ENCODE measurements at regions of chr15 and their contacts with region 1.

Region 1: DNA sequence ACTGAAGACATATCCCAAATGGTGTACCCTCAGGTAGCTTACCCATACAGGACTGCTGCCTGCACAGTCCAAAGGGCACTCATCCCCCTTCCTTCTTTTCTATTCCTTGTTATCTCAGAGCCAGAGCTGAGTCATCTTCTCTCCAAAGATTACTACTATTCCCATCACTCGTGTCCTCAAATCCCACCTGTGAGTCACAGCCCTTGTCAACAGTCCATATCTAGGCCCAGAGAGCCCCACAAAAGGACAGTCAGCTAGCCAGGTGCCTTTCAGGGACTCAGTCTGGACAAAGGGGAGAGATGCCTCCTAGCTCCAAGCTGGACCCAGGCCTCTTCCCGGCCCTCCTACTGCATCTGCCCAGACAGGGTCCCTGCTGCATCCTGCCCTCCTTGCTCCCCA is 11.0 kb downstream of the PARP16 start:
- DNase-seq: no peak
- ATAC-seq: peak; percentile 20
- H3K4me3 Mint-ChIP-seq: no peak overlapping the region
- H3K27ac Mint-ChIP-seq: peak overlapping the region; percentile 86
- H3K4me1 Mint-ChIP-seq: peaks cover 37% of the 10 kb centered on the region
- H3K27me3 Mint-ChIP-seq: no peaks in the 10 kb centered on the region

Region 2: GRCh38 chr15:65212097-65212496 is 63.6 kb before region 1 on chr15:
- CTCF ChIA-PET with region 1: interaction called, 12 read pairs
- POLR2A ChIA-PET with region 1: no interaction called
- intact Hi-C with region 1: loop called (anchors 1 to 5 kb)
- DNase-seq: peak; percentile 78
- ATAC-seq: peak; percentile 85
- H3K4me3 Mint-ChIP-seq: no peak overlapping the region
- H3K27ac Mint-ChIP-seq: no peak overlapping the region
- H3K4me1 Mint-ChIP-seq: peaks cover 3% of the 10 kb centered on the region
- H3K27me3 Mint-ChIP-seq: no peaks in the 10 kb centered on the region

Region 3: GRCh38 chr15:65217526-65218482 is 57.9 kb before region 1 on chr15:
- CTCF ChIA-PET with region 1: interaction called, 12 read pairs
- POLR2A ChIA-PET with region 1: no interaction called
- intact Hi-C with region 1: loop called in 1 of 2 experiments (anchors 5 kb)
- DNase-seq: no peak
- ATAC-seq: peak; percentile 28
- H3K4me3 Mint-ChIP-seq: no peak overlapping the region
- H3K27ac Mint-ChIP-seq: no peak overlapping the region
- H3K4me1 Mint-ChIP-seq: peaks cover 14% of the 10 kb centered on the region
- H3K27me3 Mint-ChIP-seq: no peaks in the 10 kb centered on the region

Measured in activated CD4-positive, alpha-beta T cell treated with anti-CD3 and anti-CD28 coated beads for 36 hours (primary cell).